ENCODE measurements at regions of chr13 and their contacts with region 1.

Region 1: GRCh38 chr13:23776698-23777574 is 112.3 kb downstream of the MIPEP start:
- DNase-seq: no peak
- H3K4me3 ChIP-seq: no peak overlapping the region
- H3K4me3 Mint-ChIP-seq: no peak overlapping the region
- H3K27ac Mint-ChIP-seq: no peak overlapping the region
- H3K4me1 ChIP-seq: no peaks in the 10 kb centered on the region
- H3K4me1 Mint-ChIP-seq: peaks cover 15% of the 10 kb centered on the region
- H3K27me3 ChIP-seq: no peaks in the 10 kb centered on the region
- H3K27me3 Mint-ChIP-seq: no peaks in the 10 kb centered on the region
- CTCF ChIP-seq: no peak

Region 2: GRCh38 chr13:23751187-23751586 is 25.7 kb before region 1 on chr13:
- CTCF ChIA-PET with region 1: no interaction called
- POLR2A ChIA-PET with region 1: no interaction called
- intact Hi-C with region 1: loop called (anchors 2 kb)
- DNase-seq: peak in 1 of 2 experiments; percentile 29
- H3K4me3 ChIP-seq: no peak overlapping the region
- H3K4me3 Mint-ChIP-seq: peak overlapping the region; percentile 63
- H3K27ac Mint-ChIP-seq: peak overlapping the region; percentile 89
- H3K4me1 ChIP-seq: peaks cover 74% of the 10 kb centered on the region
- H3K4me1 Mint-ChIP-seq: peaks cover 60% of the 10 kb centered on the region
- H3K27me3 ChIP-seq: no peaks in the 10 kb centered on the region
- H3K27me3 Mint-ChIP-seq: no peaks in the 10 kb centered on the region
- CTCF ChIP-seq: no peak